Sigmoid colon (tissue), 7 donors: ENCODE measurements at regions of chr3 and their contacts with region 1.

Region 1: DNA sequence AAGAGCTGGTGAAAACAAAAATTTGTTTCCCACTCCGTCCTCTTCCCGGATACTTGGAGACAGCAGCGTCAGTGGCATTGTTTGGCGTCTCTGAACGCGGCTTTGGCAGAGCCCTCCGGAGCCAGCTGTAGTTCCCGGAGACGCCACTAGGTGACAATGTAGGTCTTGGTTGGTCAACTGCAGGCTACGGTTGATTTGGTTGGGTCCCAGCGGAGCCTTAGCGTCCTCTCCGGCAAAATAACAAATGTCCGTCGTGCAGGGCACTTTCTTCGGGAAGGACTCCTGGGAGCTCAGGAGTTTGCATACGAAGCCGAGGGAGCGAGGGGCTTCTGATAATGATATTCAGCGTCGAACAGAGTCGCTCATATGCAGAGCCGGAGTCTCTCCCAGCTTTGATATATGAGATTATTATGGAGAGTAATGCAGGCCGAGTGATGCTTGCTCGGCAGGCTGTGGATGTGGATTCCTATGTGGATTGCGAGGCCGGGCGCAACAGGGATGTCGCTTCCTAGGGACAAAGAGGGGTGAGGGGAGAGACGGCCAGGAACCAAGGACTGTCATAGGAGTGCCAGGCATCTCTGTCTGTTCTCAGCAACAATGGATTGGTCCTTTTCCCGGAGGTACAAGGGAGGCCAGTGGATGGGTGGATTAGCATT is 74.8 kb downstream of the IL20RB start:
- DNase-seq: peak; percentile 92
- H3K4me3 ChIP-seq: peak overlapping the region in 3 of 4 donors; percentile 23 to 33 (median 32)
- H3K27ac ChIP-seq: no peak overlapping the region
- H3K4me1 ChIP-seq: peaks cover 0 to 5% (median 2%) of the 10 kb centered on the region in 4 donors
- H3K27me3 ChIP-seq: no peaks in the 10 kb centered on the region
- CTCF ChIP-seq: peak; percentile 78 to 98 (median 86)
- EP300 ChIP-seq: no peak
- POLR2A ChIP-seq: no peak

Region 2: GRCh38 chr3:136974670-136975069 is 57.9 kb before region 1 on chr3:
- intact Hi-C with region 1: no loop called
- DNase-seq: no peak
- H3K4me3 ChIP-seq: no peak overlapping the region
- H3K27ac ChIP-seq: no peak overlapping the region
- H3K4me1 ChIP-seq: no peaks in the 10 kb centered on the region
- H3K27me3 ChIP-seq: no peaks in the 10 kb centered on the region
- CTCF ChIP-seq: no peak
- EP300 ChIP-seq: no peak
- POLR2A ChIP-seq: no peak

Region 3: DNA sequence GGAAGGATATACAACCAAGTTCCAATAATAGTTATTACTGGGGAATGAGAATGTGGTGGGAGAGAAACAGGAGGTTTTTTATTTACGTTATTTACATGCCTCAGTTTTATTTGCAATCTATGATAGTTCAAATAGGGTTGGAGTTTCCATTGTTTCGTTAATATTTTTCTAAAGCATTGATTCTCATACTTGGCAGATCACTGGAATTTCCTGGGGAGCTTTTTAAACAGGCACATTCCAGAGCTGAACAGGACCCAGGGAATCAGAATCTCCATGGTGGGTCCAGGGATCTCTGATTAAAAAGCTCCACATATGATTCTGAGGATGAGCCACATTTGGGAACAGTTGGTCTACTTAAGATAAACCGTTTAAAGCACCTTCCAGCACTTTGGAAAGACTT is 49.1 kb after region 1 on chr3:
- intact Hi-C with region 1: no loop called
- DNase-seq: no peak
- H3K4me3 ChIP-seq: no peak overlapping the region
- H3K27ac ChIP-seq: no peak overlapping the region
- H3K4me1 ChIP-seq: no peaks in the 10 kb centered on the region
- H3K27me3 ChIP-seq: no peaks in the 10 kb centered on the region
- CTCF ChIP-seq: no peak
- EP300 ChIP-seq: no peak
- POLR2A ChIP-seq: no peak

Region 4: DNA sequence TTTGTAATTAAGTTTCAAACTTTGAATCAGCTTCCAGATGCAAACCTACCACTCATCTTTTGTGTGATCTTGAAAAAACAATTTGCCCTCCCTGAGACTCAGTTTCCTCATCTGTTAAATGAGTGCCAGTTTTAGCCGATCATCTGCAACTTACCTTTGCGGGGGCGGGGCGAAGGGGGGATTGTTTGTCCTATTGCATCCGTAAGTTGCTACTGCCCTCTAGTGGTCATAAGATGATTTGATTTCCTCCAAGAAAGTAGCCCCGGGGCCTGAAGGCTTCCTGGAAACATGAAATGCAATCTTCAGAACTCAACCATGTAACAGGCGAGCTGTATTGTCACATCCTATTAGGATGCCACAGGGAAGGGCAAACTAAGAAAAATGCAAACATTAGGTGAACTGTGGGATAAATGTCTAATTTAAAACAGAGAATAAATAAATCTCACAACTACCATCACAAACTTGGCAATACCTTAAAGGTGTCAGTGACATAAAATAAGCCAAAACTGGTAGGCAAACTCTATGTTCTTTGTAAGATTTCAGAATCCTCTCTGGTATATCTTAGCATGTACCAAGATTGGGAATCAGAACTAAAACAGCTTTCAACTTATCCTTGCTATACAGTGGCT is 913.9 kb after region 1 on chr3:
- intact Hi-C with region 1: loop called (anchors 2 kb)
- DNase-seq: peak; percentile 65
- H3K4me3 ChIP-seq: no peak overlapping the region
- H3K27ac ChIP-seq: no peak overlapping the region
- H3K4me1 ChIP-seq: no peaks in the 10 kb centered on the region
- H3K27me3 ChIP-seq: no peaks in the 10 kb centered on the region
- CTCF ChIP-seq: peak; percentile 4 to 69 (median 40)
- EP300 ChIP-seq: no peak
- POLR2A ChIP-seq: no peak